Activated naive CD8-positive, alpha-beta T cell treated with anti-CD3 and anti-CD28 coated beads, Interleukin-2, amount 10 ng/mL, durations not matched to agents 7 days and 5 days (primary cell): ENCODE measurements at regions of chr7 and their contacts with region 1.

Region 1: GRCh38 chr7:45940939-45941338 is 19.9 kb upstream of the IGFBP3 start:
- DNase-seq: no peak
- ATAC-seq: no peak
- H3K4me3 Mint-ChIP-seq: peak overlapping the region; percentile 75
- H3K27ac Mint-ChIP-seq: no peak overlapping the region
- H3K4me1 Mint-ChIP-seq: peaks cover 13% of the 10 kb centered on the region
- H3K27me3 Mint-ChIP-seq: peaks cover 4% of the 10 kb centered on the region

Region 2: DNA sequence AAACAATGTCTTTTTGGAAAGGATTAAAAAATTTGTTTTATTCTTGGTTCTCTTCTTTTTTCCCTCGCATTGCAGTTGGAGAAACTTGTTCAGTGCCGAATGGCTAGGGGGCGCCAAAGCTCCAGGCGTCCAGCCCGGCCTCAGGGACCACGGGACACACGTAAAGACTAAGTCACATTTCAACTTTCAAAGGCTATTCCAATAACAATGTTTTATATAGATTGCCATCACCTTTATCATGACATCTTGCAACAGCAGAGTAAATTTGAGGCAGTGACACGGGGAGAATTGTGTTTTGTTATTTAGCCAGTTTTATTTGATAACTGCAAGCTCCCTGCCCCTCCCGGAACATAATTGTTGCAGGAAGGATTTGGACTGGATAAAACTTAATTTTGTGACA is 17.6 kb before region 1 on chr7:
- POLR2A ChIA-PET with region 1: interaction called, 10 read pairs
- DNase-seq: peak; percentile 76
- ATAC-seq: no peak
- H3K4me3 Mint-ChIP-seq: peak overlapping the region; percentile 61
- H3K27ac Mint-ChIP-seq: no peak overlapping the region
- H3K4me1 Mint-ChIP-seq: peaks cover 27% of the 10 kb centered on the region
- H3K27me3 Mint-ChIP-seq: peaks cover 46% of the 10 kb centered on the region

Region 3: DNA sequence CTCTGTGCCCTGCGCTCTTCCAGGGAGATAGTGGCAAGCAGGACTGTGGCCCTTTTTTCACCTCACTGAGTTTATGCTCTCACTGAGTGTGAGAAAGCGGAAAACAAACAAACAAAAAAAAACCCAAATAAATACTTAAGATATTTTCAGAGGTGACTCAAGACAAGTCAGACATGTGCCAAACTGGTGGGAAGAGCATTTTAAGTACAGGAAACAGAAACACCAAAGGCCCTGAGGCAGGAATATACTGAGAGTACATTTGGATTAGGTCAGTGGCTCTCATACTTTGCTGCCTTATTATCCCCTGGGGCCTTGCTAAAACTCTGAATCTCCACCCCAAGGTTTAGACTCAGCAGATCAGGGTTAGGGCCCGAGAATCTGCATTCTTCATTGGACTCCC is 92.0 kb after region 1 on chr7:
- POLR2A ChIA-PET with region 1: no interaction called
- DNase-seq: no peak
- ATAC-seq: no peak
- H3K4me3 Mint-ChIP-seq: no peak overlapping the region
- H3K27ac Mint-ChIP-seq: no peak overlapping the region
- H3K4me1 Mint-ChIP-seq: no peaks in the 10 kb centered on the region
- H3K27me3 Mint-ChIP-seq: no peaks in the 10 kb centered on the region